ENCODE measurements at regions of chr1 and their contacts with region 1.

Region 1: DNA sequence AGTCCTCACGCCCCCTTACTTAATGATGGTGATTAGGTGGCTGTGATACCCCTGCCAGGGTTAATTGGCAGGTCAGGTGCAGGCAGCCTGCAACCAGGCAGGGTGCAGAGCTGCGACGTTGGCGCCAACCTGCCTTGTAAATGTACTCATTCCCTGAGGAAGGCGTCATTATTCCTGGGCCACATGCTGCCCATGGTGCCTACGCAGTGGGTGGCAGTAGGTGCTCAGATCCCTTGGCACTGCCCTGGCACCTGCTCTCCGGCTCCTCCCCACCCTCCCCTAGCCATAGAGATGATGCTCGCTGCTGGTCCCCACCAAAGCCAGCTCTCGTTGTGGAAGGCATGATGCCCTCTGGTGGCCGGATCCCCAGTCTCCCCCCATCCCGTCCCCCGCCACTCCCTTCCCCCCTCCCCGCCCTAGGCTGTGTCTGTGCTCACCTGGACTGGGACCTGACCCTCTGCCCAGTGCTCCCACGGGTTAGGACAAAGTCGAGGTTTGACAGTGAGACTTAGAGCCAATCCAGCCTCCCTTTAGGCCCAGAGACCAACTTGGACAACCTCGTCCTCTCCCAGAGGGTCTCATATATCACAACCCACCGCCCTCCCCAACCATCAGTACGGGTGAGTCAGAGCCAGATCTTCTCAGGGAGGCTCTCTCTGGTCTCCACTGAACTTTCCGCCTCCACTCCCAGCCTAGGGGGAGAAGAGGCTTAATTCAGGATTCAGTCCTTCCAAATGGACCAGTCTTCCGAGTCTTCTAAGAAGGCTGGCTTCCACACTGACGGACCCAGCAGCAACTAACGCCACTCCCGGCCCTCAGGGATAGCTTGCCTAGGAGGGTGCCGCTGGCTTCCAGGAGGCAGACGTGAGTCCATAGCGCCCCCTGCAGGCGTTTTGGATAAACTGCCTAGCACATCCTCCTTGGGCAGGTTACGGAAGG is 5.7 kb downstream of the KRTCAP2 start:
- DNase-seq: peak; percentile 86 to 99 (median 94)

Region 2: GRCh38 chr1:154453574-154454352 is 713.7 kb before region 1 on chr1:
- intact Hi-C with region 1: no loop called
- DNase-seq: peak in 1 of 10 donors; percentile 5

Region 3: GRCh38 chr1:155091071-155091709 is 76.2 kb before region 1 on chr1:
- intact Hi-C with region 1: loop called (anchors 1 kb)
- DNase-seq: peak; percentile 68 to 96 (median 82)

Region 4: GRCh38 chr1:155127105-155127964 is 40.1 kb before region 1 on chr1 and contains the start of gene EFNA1:
- intact Hi-C with region 1: loop called (anchors 2 kb)
- DNase-seq: peak; percentile 69 to 97 (median 86)

Measured in posterior cingulate gyrus (tissue), 11 donors.